SK-N-SH (cell line): ENCODE measurements at regions of chr3 and their contacts with region 1.

Region 1: DNA sequence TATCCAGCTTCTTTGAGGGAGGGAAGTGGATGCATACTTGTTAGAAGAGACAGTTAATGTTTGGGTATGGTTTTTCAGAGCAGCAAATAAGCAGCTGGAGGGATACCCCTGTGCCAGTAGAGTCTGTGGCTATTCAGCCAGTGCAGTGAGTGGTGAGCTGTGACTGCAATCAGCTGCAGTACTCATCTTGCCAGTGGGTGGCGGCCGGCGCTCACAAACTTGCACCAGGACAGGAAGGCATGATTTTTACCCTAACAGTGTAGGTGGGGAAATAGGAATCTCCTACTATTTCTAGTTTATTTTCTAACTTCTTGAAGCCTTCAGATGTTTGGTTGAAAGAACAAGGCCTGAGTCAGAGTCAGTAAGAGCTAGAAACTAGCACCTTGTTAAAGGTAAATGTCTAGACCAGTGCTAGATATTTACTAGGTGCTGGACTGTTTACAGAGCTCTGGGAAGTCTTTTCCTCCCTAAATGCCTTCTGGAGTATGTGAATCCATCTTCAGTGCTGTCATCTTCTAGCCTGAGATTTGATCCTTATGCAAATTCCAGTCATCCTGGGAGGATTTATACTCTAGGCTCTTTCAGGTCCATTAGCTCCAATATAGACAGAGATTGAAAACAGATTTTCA is 23.6 kb downstream of the TIMP4 start:
- DNase-seq: peak; percentile 63
- H3K4me3 ChIP-seq: peak overlapping the region in 1 of 2 experiments; percentile 23; a peak in 1 of 4 replicates
- H3K27ac ChIP-seq: no peak overlapping the region
- H3K4me1 ChIP-seq: peaks cover 0 to 10% of the 10 kb centered on the region in 2 experiments; a peak in 2 of 4 replicates
- H3K27me3 ChIP-seq: 0 out of 2 replicates have a peak, but pooled peaks cover 11% of the 10 kb centered on the region
- CTCF ChIP-seq: peak; percentile 96
- EP300 ChIP-seq: no peak
- RAD21 ChIP-seq: peak; percentile 94

Region 2: GRCh38 chr3:12150112-12150511 is 15.0 kb after region 1 on chr3:
- CTCF ChIA-PET with region 1: interaction called, 39 read pairs
- POLR2A ChIA-PET with region 1: no interaction called
- DNase-seq: no peak
- H3K4me3 ChIP-seq: no peak overlapping the region
- H3K27ac ChIP-seq: no peak overlapping the region
- H3K4me1 ChIP-seq: peaks cover 0 to 15% of the 10 kb centered on the region in 2 experiments; a peak in 1 of 4 replicates
- H3K27me3 ChIP-seq: no peaks in the 10 kb centered on the region; the same call in 1 of the 2 replicates
- CTCF ChIP-seq: no peak
- EP300 ChIP-seq: no peak
- RAD21 ChIP-seq: no peak

Region 3: GRCh38 chr3:12158387-12159226 is 23.5 kb after region 1 on chr3 and contains the start of gene TIMP4:
- CTCF ChIA-PET with region 1: interaction called, 12 read pairs
- POLR2A ChIA-PET with region 1: no interaction called
- DNase-seq: no peak
- H3K4me3 ChIP-seq: no peak within 1 kb of the TSS
- H3K27ac ChIP-seq: no peak within 1 kb of the TSS
- H3K4me1 ChIP-seq: no peaks in the 10 kb centered on the region; a peak in 1 of 4 replicates
- H3K27me3 ChIP-seq: no peaks in the 10 kb centered on the region
- CTCF ChIP-seq: no peak
- EP300 ChIP-seq: no peak
- RAD21 ChIP-seq: no peak
- polyA plus RNA-seq, gene TIMP4: not detected in 2 replicates

Region 4: DNA sequence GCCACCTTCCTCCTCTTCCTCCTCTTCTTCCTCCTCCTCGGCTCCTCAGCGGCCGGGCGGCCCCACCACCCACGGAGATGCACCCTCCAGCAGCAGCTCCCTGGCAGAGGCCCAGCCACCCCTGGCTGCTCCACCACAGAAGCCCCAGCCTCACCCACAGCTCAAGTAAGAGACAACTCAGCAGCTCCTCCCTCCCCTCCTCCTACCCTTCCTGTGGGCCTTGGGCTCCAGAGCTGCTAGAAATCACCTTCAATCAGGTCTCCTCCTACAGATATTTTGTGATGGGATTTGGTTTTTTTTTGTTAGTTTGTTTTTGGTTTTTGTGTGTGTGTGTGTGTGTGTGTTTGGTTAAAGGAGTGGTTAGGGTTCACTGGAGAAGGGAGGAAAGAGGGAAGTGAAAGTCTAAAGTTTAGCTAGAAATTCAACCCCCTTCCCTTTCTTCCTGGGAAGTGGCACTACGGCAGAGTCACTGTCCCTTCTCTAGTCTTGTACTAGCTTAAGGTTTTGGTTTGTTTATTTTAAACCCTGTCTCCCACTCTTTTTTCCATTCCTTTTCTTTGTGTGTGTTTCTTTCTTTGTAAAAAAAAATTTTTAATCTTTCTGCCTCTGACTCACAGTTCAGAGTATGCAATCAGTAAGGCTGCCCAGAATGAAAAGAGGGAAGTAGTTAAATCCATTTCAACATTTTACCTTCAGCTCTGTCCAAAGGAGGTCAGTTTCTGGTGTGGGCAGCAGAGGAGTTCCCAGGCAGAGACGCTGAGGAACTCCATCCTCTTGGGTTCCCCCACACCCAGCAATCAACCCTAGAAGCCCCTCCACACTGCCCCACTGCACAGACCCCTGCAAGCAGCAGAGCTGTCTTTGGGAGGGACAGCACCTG is 52.5 kb after region 1 on chr3:
- CTCF ChIA-PET with region 1: interaction called, 13 read pairs
- POLR2A ChIA-PET with region 1: no interaction called
- DNase-seq: no peak
- H3K4me3 ChIP-seq: no peak overlapping the region
- H3K27ac ChIP-seq: peak overlapping the region in 1 of 2 experiments; percentile 85; a peak in 2 of 4 replicates
- H3K4me1 ChIP-seq: peaks cover 0 to 22% of the 10 kb centered on the region in 2 experiments; a peak in 3 of 4 replicates
- H3K27me3 ChIP-seq: no peaks in the 10 kb centered on the region
- CTCF ChIP-seq: no peak
- EP300 ChIP-seq: no peak
- RAD21 ChIP-seq: no peak

Region 5: DNA sequence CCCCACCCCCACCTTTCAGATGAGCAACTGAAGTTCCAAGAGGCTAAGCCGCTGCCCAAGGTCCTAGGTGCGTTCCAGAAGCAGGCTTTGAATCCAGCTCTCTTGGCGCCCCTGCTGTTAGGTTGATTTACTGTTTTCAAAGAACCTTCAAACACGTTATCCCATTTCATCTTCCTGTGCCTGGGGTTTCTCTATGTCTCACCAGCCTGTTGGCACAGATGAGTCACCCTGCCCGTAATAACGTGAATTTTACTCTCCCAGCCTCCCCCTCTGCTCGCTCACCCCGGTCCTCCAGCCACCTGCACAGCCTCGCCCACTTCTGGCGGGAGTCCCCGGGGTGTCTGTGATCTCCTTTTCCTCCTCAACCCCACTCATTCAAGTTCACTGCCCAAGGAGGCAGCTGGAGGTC is 336.1 kb after region 1 on chr3:
- CTCF ChIA-PET with region 1: interaction called, 97 read pairs
- POLR2A ChIA-PET with region 1: no interaction called
- DNase-seq: no peak
- H3K4me3 ChIP-seq: no peak overlapping the region
- H3K27ac ChIP-seq: no peak overlapping the region
- H3K4me1 ChIP-seq: peaks cover 0 to 22% of the 10 kb centered on the region in 2 experiments; a peak in 2 of 4 replicates
- H3K27me3 ChIP-seq: no peaks in the 10 kb centered on the region
- CTCF ChIP-seq: peak; percentile 26; the same call in 1 of the 2 replicates
- EP300 ChIP-seq: peak in 1 of 2 experiments; percentile 46; a peak in 1 of 4 replicates
- RAD21 ChIP-seq: no peak

Region 6: DNA sequence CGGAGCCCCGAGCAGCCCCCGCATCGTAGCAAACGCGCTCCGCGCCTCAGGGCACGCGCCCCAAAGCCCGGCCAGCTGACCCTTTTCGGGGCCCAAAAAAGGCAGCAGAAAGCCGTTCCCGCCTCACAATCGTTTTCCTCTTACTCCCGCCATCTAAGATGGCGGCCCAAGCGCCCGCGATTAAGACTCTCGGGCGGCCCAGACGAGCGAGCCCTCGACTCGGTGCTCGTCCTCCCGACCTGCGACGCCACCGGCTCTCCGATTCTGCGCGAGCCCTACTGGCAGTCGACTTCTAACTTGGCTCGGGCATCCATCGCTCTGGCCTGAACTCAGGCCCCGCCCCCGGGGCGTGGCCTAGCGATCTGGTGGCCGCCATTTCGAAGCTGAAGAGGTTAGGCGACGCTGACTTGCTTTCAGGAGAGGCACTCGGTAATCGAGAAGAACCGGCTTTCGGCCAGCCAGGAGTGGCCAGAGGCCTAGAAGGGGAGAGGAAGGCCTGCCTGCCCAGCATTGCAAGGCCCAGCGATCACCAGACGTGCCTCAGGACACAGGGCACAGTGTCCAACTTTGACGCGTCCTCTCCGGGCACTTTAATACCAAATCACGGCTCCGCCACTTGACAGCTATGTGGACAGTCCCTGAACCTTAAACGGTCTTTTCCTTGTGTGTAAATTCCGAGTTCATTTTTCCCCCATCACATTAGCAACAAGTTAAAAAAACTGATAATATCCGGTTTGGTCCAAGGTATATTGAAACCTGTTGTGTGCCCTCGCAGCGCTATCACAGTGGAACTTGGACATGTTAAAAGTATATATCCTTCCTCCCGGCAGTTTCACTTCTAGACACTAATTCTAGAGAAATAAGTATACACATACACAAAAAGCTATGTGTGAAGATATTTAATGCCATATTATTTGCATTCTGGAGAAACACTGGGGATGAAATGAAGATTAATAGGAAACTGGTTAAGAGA is 529.1 kb after region 1 on chr3 and contains the start of gene RAF1:
- CTCF ChIA-PET with region 1: no interaction called
- POLR2A ChIA-PET with region 1: no interaction called
- DNase-seq: peak; percentile 96
- H3K4me3 ChIP-seq: peak within 1 kb of the TSS; percentile 86 to 94
- H3K27ac ChIP-seq: peak within 1 kb of the TSS; percentile 97 to 98
- H3K4me1 ChIP-seq: peaks cover 3 to 15% of the 10 kb centered on the region in 2 experiments; a peak in 2 of 4 replicates
- H3K27me3 ChIP-seq: no peaks in the 10 kb centered on the region
- CTCF ChIP-seq: no peak
- EP300 ChIP-seq: peak in 1 of 2 experiments; percentile 28; a peak in 2 of 4 replicates
- RAD21 ChIP-seq: no peak
- polyA plus RNA-seq, gene RAF1: 58.7 and 82.3 TPM in 2 replicates